ENCODE measurements at regions of chr17 and their contacts with region 1.

Region 1: DNA sequence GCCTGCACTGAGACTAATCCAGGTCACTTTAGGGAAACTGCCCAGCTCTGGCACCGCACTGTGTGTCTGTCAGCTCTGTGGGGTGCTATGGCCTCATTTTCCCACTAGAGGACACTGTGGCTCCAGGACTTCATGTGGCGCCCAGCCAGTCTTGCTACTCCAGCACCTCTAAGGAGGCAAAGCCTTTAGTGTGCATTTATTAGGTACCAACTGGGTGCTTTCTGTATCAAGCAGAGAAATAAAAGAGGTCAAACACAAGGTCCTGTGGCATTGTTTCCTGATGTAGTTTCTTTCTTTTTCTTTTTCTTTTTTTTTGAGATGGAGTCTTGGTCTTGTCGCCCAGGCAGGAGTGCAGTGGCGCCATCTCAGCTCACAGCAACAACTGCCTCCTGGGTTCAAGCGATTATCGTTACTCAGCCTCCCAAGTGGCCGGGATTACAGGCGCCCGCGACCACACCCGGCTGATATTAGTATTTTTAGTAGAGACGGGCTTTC is 12.5 kb upstream of the RHBDL3 start:
- DNase-seq: peak; percentile 77
- H3K4me3 ChIP-seq: no peak overlapping the region
- H3K27ac ChIP-seq: no peak overlapping the region
- H3K4me1 ChIP-seq: no peaks in the 10 kb centered on the region
- H3K27me3 ChIP-seq: peaks cover 0 to 10% of the 10 kb centered on the region in 2 experiments
- CTCF ChIP-seq: peak; percentile 94 to 98
- POLR2A ChIP-seq: no peak

Region 2: GRCh38 chr17:32206861-32207260 is 46.3 kb before region 1 on chr17:
- CTCF ChIA-PET with region 1: interaction called, 12 read pairs
- POLR2A ChIA-PET with region 1: no interaction called
- dilution Hi-C with region 1: no loop called
- intact Hi-C with region 1: no loop called
- DNase-seq: no peak
- H3K4me3 ChIP-seq: no peak overlapping the region
- H3K27ac ChIP-seq: no peak overlapping the region
- H3K4me1 ChIP-seq: peaks cover 9% of the 10 kb centered on the region
- H3K27me3 ChIP-seq: no peaks in the 10 kb centered on the region
- CTCF ChIP-seq: no peak
- POLR2A ChIP-seq: no peak

Region 3: GRCh38 chr17:32240750-32241149 is 12.4 kb before region 1 on chr17:
- CTCF ChIA-PET with region 1: interaction called, 25 read pairs
- POLR2A ChIA-PET with region 1: no interaction called
- dilution Hi-C with region 1: no loop called
- intact Hi-C with region 1: no loop called
- DNase-seq: no peak
- H3K4me3 ChIP-seq: no peak overlapping the region
- H3K27ac ChIP-seq: no peak overlapping the region
- H3K4me1 ChIP-seq: no peaks in the 10 kb centered on the region
- H3K27me3 ChIP-seq: no peaks in the 10 kb centered on the region
- CTCF ChIP-seq: no peak
- POLR2A ChIP-seq: no peak

Region 4: GRCh38 chr17:32311028-32311536 is 57.9 kb after region 1 on chr17:
- CTCF ChIA-PET with region 1: interaction called, 94 read pairs
- POLR2A ChIA-PET with region 1: no interaction called
- dilution Hi-C with region 1: no loop called
- intact Hi-C with region 1: no loop called
- DNase-seq: no peak
- H3K4me3 ChIP-seq: no peak overlapping the region
- H3K27ac ChIP-seq: no peak overlapping the region
- H3K4me1 ChIP-seq: no peaks in the 10 kb centered on the region
- H3K27me3 ChIP-seq: peaks cover 15 to 16% of the 10 kb centered on the region in 2 experiments
- CTCF ChIP-seq: no peak
- POLR2A ChIP-seq: no peak

Region 5: DNA sequence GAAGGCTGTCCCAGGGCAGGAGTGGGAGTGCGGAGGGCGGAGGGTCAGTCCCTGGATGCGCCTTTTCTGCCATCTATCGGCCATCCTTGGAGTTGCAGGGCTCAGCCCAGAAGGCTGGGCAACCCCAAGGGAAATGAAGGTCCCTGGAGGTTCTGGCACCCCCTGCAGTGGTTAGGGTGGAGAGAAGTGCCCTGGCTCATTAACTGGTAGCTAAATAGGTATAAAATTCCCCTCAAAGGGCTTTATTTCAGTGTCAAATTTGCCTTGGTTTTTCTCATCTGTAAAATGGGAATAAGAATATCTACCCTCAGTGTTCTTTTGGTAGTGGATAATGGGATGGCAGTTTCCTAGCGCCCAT is 66.4 kb after region 1 on chr17:
- CTCF ChIA-PET with region 1: interaction called, 94 read pairs
- POLR2A ChIA-PET with region 1: no interaction called
- dilution Hi-C with region 1: no loop called
- intact Hi-C with region 1: loop called (anchors 1 kb)
- DNase-seq: peak; percentile 57
- H3K4me3 ChIP-seq: no peak overlapping the region
- H3K27ac ChIP-seq: no peak overlapping the region
- H3K4me1 ChIP-seq: no peaks in the 10 kb centered on the region
- H3K27me3 ChIP-seq: peaks cover 5 to 8% of the 10 kb centered on the region in 2 experiments
- CTCF ChIP-seq: peak; percentile 93 to 95
- POLR2A ChIP-seq: no peak

Region 6: GRCh38 chr17:32349854-32350665 is 96.9 kb after region 1 on chr17 and contains the start of gene ZNF207:
- CTCF ChIA-PET with region 1: interaction called, 13 read pairs
- POLR2A ChIA-PET with region 1: no interaction called
- dilution Hi-C with region 1: no loop called
- intact Hi-C with region 1: no loop called
- DNase-seq: peak; percentile 97
- H3K4me3 ChIP-seq: peak within 1 kb of the TSS; percentile 91 to 96 (median 93)
- H3K27ac ChIP-seq: peak within 1 kb of the TSS; percentile 97
- H3K4me1 ChIP-seq: peaks cover 19% of the 10 kb centered on the region
- H3K27me3 ChIP-seq: no peaks in the 10 kb centered on the region
- CTCF ChIP-seq: no peak
- POLR2A ChIP-seq: peak; percentile 92
- total RNA-seq, gene ZNF207: 206 and 209 TPM in 2 replicates

Region 7: GRCh38 chr17:32444308-32445073 is 191.3 kb after region 1 on chr17 and contains the start of gene PSMD11:
- CTCF ChIA-PET with region 1: interaction called, 10 read pairs
- POLR2A ChIA-PET with region 1: no interaction called
- dilution Hi-C with region 1: no loop called
- intact Hi-C with region 1: no loop called
- DNase-seq: peak; percentile 97
- H3K4me3 ChIP-seq: peak within 1 kb of the TSS; percentile 53 to 80 (median 57)
- H3K27ac ChIP-seq: peak within 1 kb of the TSS; percentile 59
- H3K4me1 ChIP-seq: peaks cover 18% of the 10 kb centered on the region
- H3K27me3 ChIP-seq: peaks cover 10 to 11% of the 10 kb centered on the region in 2 experiments
- CTCF ChIP-seq: peak; percentile 97 to 98
- POLR2A ChIP-seq: peak; percentile 42
- total RNA-seq, gene PSMD11: 153 and 161 TPM in 2 replicates

Region 8: GRCh38 chr17:32596628-32597027 is 343.5 kb after region 1 on chr17:
- CTCF ChIA-PET with region 1: no interaction called
- POLR2A ChIA-PET with region 1: no interaction called
- dilution Hi-C with region 1: no loop called
- intact Hi-C with region 1: no loop called
- DNase-seq: no peak
- H3K4me3 ChIP-seq: no peak overlapping the region
- H3K27ac ChIP-seq: no peak overlapping the region
- H3K4me1 ChIP-seq: no peaks in the 10 kb centered on the region
- H3K27me3 ChIP-seq: no peaks in the 10 kb centered on the region
- CTCF ChIP-seq: no peak
- POLR2A ChIP-seq: no peak